Sigmoid colon (tissue), 7 donors: ENCODE measurements at regions of chr1 and their contacts with region 1.

Region 1: GRCh38 chr1:223081181-223081994 is 61.7 kb downstream of the TLR5 start:
- DNase-seq: peak; percentile 95
- H3K4me3 ChIP-seq: peak overlapping the region in 3 of 4 donors; percentile 27 to 41 (median 39)
- H3K27ac ChIP-seq: peak overlapping the region; percentile 69 to 85 (median 76)
- H3K4me1 ChIP-seq: peaks cover 0 to 57% (median 43%) of the 10 kb centered on the region in 4 donors
- H3K27me3 ChIP-seq: no peaks in the 10 kb centered on the region
- CTCF ChIP-seq: peak; percentile 94 to 96 (median 96)
- EP300 ChIP-seq: peak in 1 of 4 donors; percentile 8
- POLR2A ChIP-seq: no peak

Region 2: DNA sequence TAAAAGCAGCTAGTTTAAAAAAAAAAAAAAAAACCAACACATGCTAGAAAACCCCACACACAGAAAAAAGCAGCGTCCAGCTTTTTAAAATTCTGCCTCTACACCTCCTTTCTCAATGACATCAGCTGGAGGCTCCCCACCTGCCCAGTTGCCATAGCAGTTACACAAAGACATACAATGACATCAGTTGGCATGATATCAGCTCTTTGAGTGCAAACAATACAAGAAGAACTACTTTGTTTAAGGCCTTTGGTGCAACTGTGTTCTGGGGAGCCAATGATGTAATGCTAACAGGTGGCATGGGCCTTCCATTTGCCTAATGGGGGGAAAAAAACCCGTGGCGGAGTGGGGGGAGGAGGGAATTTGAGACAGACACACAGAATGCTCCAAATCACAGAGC is 1372.4 kb before region 1 on chr1:
- intact Hi-C with region 1: loop called (anchors 10 kb)
- DNase-seq: peak; percentile 85
- H3K4me3 ChIP-seq: no peak overlapping the region
- H3K27ac ChIP-seq: peak overlapping the region; percentile 74 to 89 (median 81)
- H3K4me1 ChIP-seq: peaks cover 0 to 98% (median 85%) of the 10 kb centered on the region in 4 donors
- H3K27me3 ChIP-seq: no peaks in the 10 kb centered on the region
- CTCF ChIP-seq: no peak
- EP300 ChIP-seq: peak in 3 of 4 donors; percentile 53 to 93 (median 89)
- POLR2A ChIP-seq: no peak

Region 3: GRCh38 chr1:222736972-222737371 is 344.4 kb before region 1 on chr1 and contains the start of gene FAM177B:
- intact Hi-C with region 1: loop called (anchors 2 kb)
- DNase-seq: no peak
- H3K4me3 ChIP-seq: no peak within 1 kb of the TSS
- H3K27ac ChIP-seq: no peak within 1 kb of the TSS
- H3K4me1 ChIP-seq: peaks cover 0 to 9% (median 3%) of the 10 kb centered on the region in 4 donors
- H3K27me3 ChIP-seq: no peaks in the 10 kb centered on the region
- CTCF ChIP-seq: no peak
- EP300 ChIP-seq: no peak
- POLR2A ChIP-seq: no peak
- total RNA-seq, gene FAM177B: 0.36 to 4.7 (median 0.54) TPM in 3 of 4 donors, not detected in the other

Region 4: GRCh38 chr1:222754366-222755139 is 326.8 kb before region 1 on chr1:
- intact Hi-C with region 1: loop called (anchors 2 kb)
- DNase-seq: peak; percentile 88
- H3K4me3 ChIP-seq: no peak overlapping the region
- H3K27ac ChIP-seq: peak overlapping the region in 3 of 4 donors; percentile 79 to 89 (median 89)
- H3K4me1 ChIP-seq: peaks cover 0 to 45% (median 32%) of the 10 kb centered on the region in 4 donors
- H3K27me3 ChIP-seq: no peaks in the 10 kb centered on the region
- CTCF ChIP-seq: no peak
- EP300 ChIP-seq: peak in 1 of 4 donors; percentile 28
- POLR2A ChIP-seq: no peak

Region 5: DNA sequence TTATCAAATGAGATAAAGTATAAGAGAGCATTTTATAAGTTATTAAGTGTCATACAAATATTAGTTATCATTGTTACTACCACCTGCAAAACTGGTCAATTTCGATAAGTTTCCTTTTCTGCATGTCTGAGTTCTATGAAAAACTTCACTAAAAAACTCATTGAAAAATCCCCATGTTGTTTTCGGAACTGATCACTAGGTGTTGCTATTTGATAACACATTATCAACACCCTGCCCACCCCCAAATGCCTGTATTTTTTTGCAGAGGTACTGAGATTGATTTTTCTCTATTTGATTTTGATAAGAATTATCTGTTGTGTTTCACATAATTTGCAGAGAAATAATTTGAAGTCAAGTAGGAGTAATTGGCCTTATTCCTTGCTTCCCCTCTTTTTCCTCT is 288.6 kb before region 1 on chr1:
- intact Hi-C with region 1: loop called (anchors 1 kb)
- DNase-seq: no peak
- H3K4me3 ChIP-seq: no peak overlapping the region
- H3K27ac ChIP-seq: no peak overlapping the region
- H3K4me1 ChIP-seq: peaks cover 0 to 42% (median 15%) of the 10 kb centered on the region in 4 donors
- H3K27me3 ChIP-seq: no peaks in the 10 kb centered on the region
- CTCF ChIP-seq: peak; percentile 34 to 56 (median 48)
- EP300 ChIP-seq: no peak
- POLR2A ChIP-seq: no peak

Region 6: DNA sequence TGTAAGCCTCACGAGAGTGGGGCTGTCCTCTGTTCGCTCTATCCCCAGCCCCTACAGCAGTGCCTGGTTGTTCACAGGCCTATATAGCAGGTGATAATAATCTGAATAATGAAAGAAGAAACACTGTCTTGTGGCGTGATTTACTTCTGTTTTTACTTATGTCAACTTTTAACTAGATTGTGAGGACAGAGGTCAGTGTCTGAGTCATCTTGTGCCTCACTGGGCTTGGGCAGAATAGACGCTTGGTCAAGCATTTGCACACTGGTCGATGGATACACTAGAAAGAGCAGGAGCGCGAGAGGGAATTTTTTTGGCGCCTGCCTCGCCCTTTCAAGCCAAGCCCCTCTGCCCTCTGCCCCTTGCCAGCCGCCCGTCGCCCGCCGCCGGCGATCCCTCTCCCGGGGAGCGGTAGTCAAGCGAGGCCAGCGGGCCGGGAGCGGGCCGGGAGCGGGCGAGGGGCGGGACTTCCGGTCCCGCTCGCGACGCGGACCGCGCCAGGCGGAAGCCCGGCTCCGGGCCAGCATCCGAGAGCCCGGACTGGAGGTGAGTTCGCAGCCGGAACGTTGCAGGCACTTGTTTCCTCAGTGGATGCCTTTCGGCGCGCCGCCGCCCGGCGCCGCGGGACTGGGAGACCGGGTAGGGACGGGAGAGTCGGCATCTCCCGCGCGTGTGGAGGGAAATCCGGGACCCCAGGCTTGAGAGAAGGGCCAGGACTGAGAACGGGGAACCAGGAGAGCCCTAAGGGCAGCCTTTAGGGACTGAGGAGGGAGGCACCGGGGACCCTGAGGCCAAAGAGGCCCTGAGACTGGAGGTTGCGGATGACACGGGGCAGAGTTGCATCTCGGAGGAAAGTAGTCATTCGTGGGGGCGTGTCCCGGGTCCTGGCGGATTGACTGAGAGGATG is 266.6 kb before region 1 on chr1 and contains the start of gene DISP1:
- intact Hi-C with region 1: loop called (anchors 5 kb)
- DNase-seq: peak; percentile 95
- H3K4me3 ChIP-seq: peak within 1 kb of the TSS; percentile 72 to 92 (median 90)
- H3K27ac ChIP-seq: peak within 1 kb of the TSS; percentile 89 to 99 (median 98)
- H3K4me1 ChIP-seq: peaks cover 4 to 51% (median 34%) of the 10 kb centered on the region in 4 donors
- H3K27me3 ChIP-seq: no peaks in the 10 kb centered on the region
- CTCF ChIP-seq: peak in 1 of 4 experiments; percentile 23
- EP300 ChIP-seq: peak in 1 of 4 donors; percentile 16
- POLR2A ChIP-seq: peak; percentile 65 to 84
- total RNA-seq, gene DISP1: 17.1 to 31.3 (median 23.5) TPM

Region 7: GRCh38 chr1:222974496-222974895 is 106.9 kb before region 1 on chr1:
- intact Hi-C with region 1: loop called (anchors 10 kb)
- DNase-seq: no peak
- H3K4me3 ChIP-seq: no peak overlapping the region
- H3K27ac ChIP-seq: peak overlapping the region in 3 of 4 donors; percentile 64 to 77 (median 68)
- H3K4me1 ChIP-seq: peaks cover 0 to 46% (median 31%) of the 10 kb centered on the region in 4 donors
- H3K27me3 ChIP-seq: no peaks in the 10 kb centered on the region
- CTCF ChIP-seq: no peak
- EP300 ChIP-seq: peak; percentile 93 to 97 (median 96)
- POLR2A ChIP-seq: no peak

Region 8: GRCh38 chr1:223041473-223041872 is 39.9 kb before region 1 on chr1:
- intact Hi-C with region 1: no loop called
- DNase-seq: no peak
- H3K4me3 ChIP-seq: no peak overlapping the region
- H3K27ac ChIP-seq: peak overlapping the region in 1 of 4 donors; percentile 18
- H3K4me1 ChIP-seq: peaks cover 0 to 22% (median 15%) of the 10 kb centered on the region in 4 donors
- H3K27me3 ChIP-seq: no peaks in the 10 kb centered on the region
- CTCF ChIP-seq: no peak
- EP300 ChIP-seq: no peak
- POLR2A ChIP-seq: no peak